T-cell (primary cell): ENCODE measurements at regions of chr9 and their contacts with region 1.

Region 1: GRCh38 chr9:33852216-33852826 is 35.4 kb downstream of the UBE2R2 start:
- DNase-seq: peak; percentile 16 to 76 (median 47)
- ATAC-seq: peak; percentile 54 to 79 (median 64)
- H3K4me3 ChIP-seq: no peak overlapping the region
- H3K4me3 Mint-ChIP-seq: no peak overlapping the region
- H3K27ac ChIP-seq: no peak overlapping the region
- H3K27ac Mint-ChIP-seq: no peak overlapping the region
- H3K4me1 ChIP-seq: peaks cover 7 to 8% of the 10 kb centered on the region in 2 experiments
- H3K4me1 Mint-ChIP-seq: peaks cover 46 to 52% (median 46%) of the 10 kb centered on the region in 3 donors
- H3K27me3 ChIP-seq: no peaks in the 10 kb centered on the region
- H3K27me3 Mint-ChIP-seq: no peaks in the 10 kb centered on the region

Region 2: GRCh38 chr9:33816327-33817252 is 35.7 kb before region 1 on chr9 and contains the start of gene UBE2R2:
- CTCF ChIA-PET with region 1: interaction called, 21 to 78 read pairs
- POLR2A ChIA-PET with region 1: interaction called in 1 of 2 experiments, 6 read pairs
- DNase-seq: peak; percentile 81 to 98 (median 92)
- ATAC-seq: peak; percentile 82 to 86 (median 84)
- H3K4me3 ChIP-seq: peak within 1 kb of the TSS; percentile 94 to 99
- H3K4me3 Mint-ChIP-seq: peak within 1 kb of the TSS; percentile 84 to 97 (median 88)
- H3K27ac ChIP-seq: peak within 1 kb of the TSS; percentile 95
- H3K27ac Mint-ChIP-seq: peak within 1 kb of the TSS; percentile 94 to 97
- H3K4me1 ChIP-seq: peaks cover 11 to 20% of the 10 kb centered on the region in 2 experiments
- H3K4me1 Mint-ChIP-seq: peaks cover 46 to 57% (median 57%) of the 10 kb centered on the region in 3 donors
- H3K27me3 ChIP-seq: no peaks in the 10 kb centered on the region
- H3K27me3 Mint-ChIP-seq: no peaks in the 10 kb centered on the region
- total RNA-seq, gene UBE2R2: 23.8 to 29.3 (median 28.1) TPM